Activated naive CD4-positive, alpha-beta T cell treated with anti-CD3 and anti-CD28 coated beads, Interleukin-2, amount 10 ng/mL, durations not matched to agents 7 days and 5 days (primary cell): ENCODE measurements at regions of chr3 and their contacts with region 1.

Region 1: DNA sequence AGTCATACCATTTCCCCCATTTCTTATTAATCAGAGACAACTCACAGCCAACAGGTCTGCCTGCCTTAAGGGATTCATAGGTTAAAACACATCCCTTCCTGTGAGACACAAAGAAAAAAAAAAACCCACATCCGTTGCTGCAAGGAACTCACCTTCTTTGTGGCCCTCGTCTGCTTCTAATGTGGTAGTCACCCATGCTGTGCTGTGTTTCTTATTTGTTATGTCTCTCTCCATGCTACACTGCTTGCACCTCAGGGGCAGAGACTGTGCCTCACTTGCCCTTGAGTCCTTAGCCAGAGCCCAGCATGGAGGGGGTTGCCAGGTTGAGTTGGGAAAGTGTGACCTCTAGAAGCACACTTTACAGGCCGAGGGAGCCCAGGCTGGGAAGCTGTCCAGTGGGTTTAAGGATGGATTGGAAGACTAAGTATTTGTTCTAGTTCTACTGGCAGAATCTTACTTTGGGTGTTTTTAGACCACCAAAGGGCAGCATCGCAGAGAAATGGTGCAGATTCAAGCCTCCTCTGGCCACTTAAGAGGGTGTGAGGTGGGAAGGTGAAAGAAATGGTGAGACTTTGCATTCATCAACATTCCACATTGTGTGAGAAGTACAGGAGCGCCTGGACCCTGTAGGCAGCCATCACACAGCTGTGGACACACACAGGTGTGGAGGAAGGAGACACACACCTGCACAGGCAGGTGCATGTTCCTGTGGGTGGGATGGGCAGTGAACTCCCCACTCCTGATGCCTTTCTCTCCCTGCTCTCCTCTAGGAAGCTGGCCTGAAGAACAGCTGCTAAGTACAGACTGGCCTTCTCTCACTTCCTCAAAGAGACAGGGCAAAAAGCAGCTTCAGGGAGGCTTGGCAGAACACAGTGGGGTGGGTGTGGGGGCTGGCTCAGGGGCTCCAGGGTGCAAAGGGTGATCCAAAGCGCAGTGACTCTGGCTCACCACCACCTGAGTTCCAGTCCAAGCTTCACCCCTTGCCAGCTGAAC is 48.8 kb downstream of the GLB1 start:
- DNase-seq: peak; percentile 74
- H3K4me3 Mint-ChIP-seq: peak overlapping the region; percentile 63
- H3K27ac Mint-ChIP-seq: peak overlapping the region; percentile 95
- H3K4me1 Mint-ChIP-seq: peaks cover 94% of the 10 kb centered on the region
- H3K27me3 Mint-ChIP-seq: no peaks in the 10 kb centered on the region

Region 2: GRCh38 chr3:32493437-32494414 is 554.4 kb before region 1 on chr3:
- CTCF ChIA-PET with region 1: no interaction called
- DNase-seq: no peak
- H3K4me3 Mint-ChIP-seq: no peak overlapping the region
- H3K27ac Mint-ChIP-seq: no peak overlapping the region
- H3K4me1 Mint-ChIP-seq: peaks cover 13% of the 10 kb centered on the region
- H3K27me3 Mint-ChIP-seq: no peaks in the 10 kb centered on the region

Region 3: DNA sequence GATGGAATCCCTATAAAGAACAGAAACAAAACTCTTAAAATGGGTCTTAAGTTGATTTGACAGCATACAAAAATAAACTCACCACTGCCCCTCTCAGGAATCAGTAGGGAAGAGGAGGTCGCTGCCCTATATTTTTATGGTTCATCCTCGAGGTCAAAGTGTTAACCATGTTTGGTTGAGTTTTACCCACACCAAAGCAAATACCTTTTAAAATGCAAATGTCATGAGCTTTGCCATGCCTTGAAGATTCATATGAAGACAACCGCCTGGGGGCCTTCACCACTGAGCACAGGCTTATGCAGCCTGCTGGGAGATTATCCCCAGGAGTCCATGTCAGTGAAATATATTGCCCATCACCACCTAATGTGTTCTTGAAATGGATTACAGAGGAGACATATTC is 17.3 kb before region 1 on chr3:
- CTCF ChIA-PET with region 1: interaction called, 29 read pairs
- DNase-seq: peak; percentile 53
- H3K4me3 Mint-ChIP-seq: no peak overlapping the region
- H3K27ac Mint-ChIP-seq: no peak overlapping the region
- H3K4me1 Mint-ChIP-seq: peaks cover 33% of the 10 kb centered on the region
- H3K27me3 Mint-ChIP-seq: no peaks in the 10 kb centered on the region

Region 4: DNA sequence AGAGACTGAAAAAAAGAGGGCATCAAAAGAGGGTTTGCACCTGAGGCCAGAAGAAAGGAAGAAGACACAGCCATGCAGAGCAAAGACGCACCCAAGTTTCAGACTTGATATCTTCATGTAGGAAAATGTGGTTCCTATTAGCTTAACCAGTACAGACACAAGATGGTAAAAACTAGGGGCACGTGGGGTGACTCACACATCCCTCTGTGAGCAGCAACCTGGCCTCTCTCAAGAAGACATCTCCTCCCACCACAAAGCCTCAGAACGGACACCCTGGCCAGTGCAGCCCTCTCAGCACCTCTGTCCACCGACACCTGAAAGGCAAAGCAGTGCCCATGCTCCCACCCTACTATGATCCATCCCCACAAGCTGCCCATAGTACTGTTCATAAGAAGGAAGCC is 15.5 kb after region 1 on chr3:
- CTCF ChIA-PET with region 1: interaction called, 24 read pairs
- DNase-seq: peak; percentile 74
- H3K4me3 Mint-ChIP-seq: peak overlapping the region; percentile 35
- H3K27ac Mint-ChIP-seq: peak overlapping the region; percentile 89
- H3K4me1 Mint-ChIP-seq: peaks cover 73% of the 10 kb centered on the region
- H3K27me3 Mint-ChIP-seq: no peaks in the 10 kb centered on the region

Region 5: GRCh38 chr3:33074217-33075067 is 26.3 kb after region 1 on chr3:
- CTCF ChIA-PET with region 1: interaction called, 20 read pairs
- DNase-seq: peak; percentile 79
- H3K4me3 Mint-ChIP-seq: no peak overlapping the region
- H3K27ac Mint-ChIP-seq: no peak overlapping the region
- H3K4me1 Mint-ChIP-seq: peaks cover 44% of the 10 kb centered on the region
- H3K27me3 Mint-ChIP-seq: no peaks in the 10 kb centered on the region